ENCODE measurements at regions of chr11 and their contacts with region 1.

Region 1: GRCh38 chr11:128482512-128483191 is 104.7 kb downstream of the ETS1 start:
- DNase-seq: peak in 6 of 14 experiments; percentile 51 to 87 (median 70)
- ATAC-seq: peak; percentile 58
- H3K4me3 ChIP-seq: peak overlapping the region; percentile 46
- H3K4me3 Mint-ChIP-seq: peak overlapping the region; percentile 76
- H3K27ac ChIP-seq: peak overlapping the region; percentile 92 to 94
- H3K27ac Mint-ChIP-seq: peak overlapping the region; percentile 99
- H3K4me1 ChIP-seq: peaks cover 95% of the 10 kb centered on the region
- H3K4me1 Mint-ChIP-seq: peaks cover 99% of the 10 kb centered on the region
- H3K27me3 ChIP-seq: no peaks in the 10 kb centered on the region
- H3K27me3 Mint-ChIP-seq: no peaks in the 10 kb centered on the region
- CTCF ChIP-seq: no peak

Region 2: DNA sequence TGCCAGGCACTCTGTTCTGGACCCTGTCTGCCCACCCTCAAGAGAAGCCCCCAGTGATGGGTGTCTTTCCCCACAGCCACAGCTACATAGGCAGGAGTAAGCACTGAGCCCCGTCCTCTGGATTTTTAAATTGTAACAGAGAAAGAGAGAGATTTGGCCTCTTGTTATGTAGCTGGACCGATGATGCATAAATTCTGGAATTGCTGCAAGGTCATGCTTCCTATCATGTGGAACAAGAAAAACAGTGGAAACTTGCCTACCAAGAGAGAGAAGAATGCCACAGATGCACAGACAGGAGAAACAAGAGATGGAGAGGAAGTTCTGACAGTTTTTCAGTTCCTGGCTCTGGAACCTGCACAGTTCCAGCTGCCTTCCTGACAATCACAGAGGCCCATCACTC is 45.5 kb before region 1 on chr11:
- CTCF ChIA-PET with region 1: no interaction called
- POLR2A ChIA-PET with region 1: no interaction called
- intact Hi-C with region 1: no loop called
- DNase-seq: no peak
- ATAC-seq: no peak
- H3K4me3 ChIP-seq: no peak overlapping the region
- H3K4me3 Mint-ChIP-seq: no peak overlapping the region
- H3K27ac ChIP-seq: no peak overlapping the region
- H3K27ac Mint-ChIP-seq: no peak overlapping the region
- H3K4me1 ChIP-seq: no peaks in the 10 kb centered on the region
- H3K4me1 Mint-ChIP-seq: peaks cover 31% of the 10 kb centered on the region
- H3K27me3 ChIP-seq: no peaks in the 10 kb centered on the region
- H3K27me3 Mint-ChIP-seq: no peaks in the 10 kb centered on the region
- CTCF ChIP-seq: no peak

Region 3: DNA sequence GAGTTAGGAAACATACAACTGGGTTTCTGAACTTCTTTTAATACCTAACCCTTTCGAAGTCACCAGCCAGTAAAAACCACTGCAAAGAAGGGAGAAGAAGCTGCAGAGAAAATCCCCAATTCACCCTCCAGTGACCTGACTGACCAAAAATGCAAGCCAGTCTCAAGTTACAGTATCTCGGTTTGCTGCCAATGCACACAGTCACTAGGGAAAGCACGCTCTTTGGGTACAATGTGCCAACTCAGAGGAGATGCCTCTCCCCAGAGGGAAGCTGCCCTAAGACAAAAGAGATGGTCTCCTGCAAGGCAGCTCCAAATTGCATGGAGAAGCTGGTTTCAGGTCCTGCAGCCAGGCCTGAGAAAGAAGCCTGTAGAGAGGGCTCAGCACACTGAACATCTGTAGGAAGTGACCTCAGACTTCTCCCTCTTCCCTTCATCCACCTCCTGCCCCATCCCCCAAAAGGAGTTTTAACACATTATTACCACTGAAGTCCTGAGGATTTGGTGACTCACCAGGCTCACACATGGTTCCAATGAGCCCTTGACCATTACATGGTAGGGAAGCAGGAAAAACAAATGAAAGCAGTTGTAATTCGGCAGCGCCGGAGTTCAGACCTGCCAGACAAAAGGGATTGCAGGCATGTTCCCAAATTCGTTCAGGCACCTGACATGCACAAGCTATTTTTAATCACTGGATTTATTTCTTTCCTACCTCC is 14.6 kb after region 1 on chr11:
- CTCF ChIA-PET with region 1: interaction called, 4 read pairs
- POLR2A ChIA-PET with region 1: interaction called, 611 read pairs
- intact Hi-C with region 1: loop called (anchors 1 to 2 kb)
- DNase-seq: peak in 3 of 14 experiments; percentile 16 to 65 (median 59)
- ATAC-seq: no peak
- H3K4me3 ChIP-seq: peak overlapping the region; percentile 39
- H3K4me3 Mint-ChIP-seq: peak overlapping the region; percentile 65
- H3K27ac ChIP-seq: peak overlapping the region; percentile 39 to 93
- H3K27ac Mint-ChIP-seq: peak overlapping the region; percentile 99
- H3K4me1 ChIP-seq: peaks cover 75% of the 10 kb centered on the region
- H3K4me1 Mint-ChIP-seq: peaks cover 100% of the 10 kb centered on the region
- H3K27me3 ChIP-seq: no peaks in the 10 kb centered on the region
- H3K27me3 Mint-ChIP-seq: no peaks in the 10 kb centered on the region
- CTCF ChIP-seq: no peak

Region 4: GRCh38 chr11:128802358-128802981 is 319.8 kb after region 1 on chr11:
- CTCF ChIA-PET with region 1: no interaction called
- POLR2A ChIA-PET with region 1: no interaction called
- intact Hi-C with region 1: no loop called
- DNase-seq: no peak
- ATAC-seq: no peak
- H3K4me3 ChIP-seq: no peak overlapping the region
- H3K4me3 Mint-ChIP-seq: no peak overlapping the region
- H3K27ac ChIP-seq: no peak overlapping the region
- H3K27ac Mint-ChIP-seq: peak overlapping the region; percentile 57
- H3K4me1 ChIP-seq: peaks cover 8% of the 10 kb centered on the region
- H3K4me1 Mint-ChIP-seq: peaks cover 24% of the 10 kb centered on the region
- H3K27me3 ChIP-seq: no peaks in the 10 kb centered on the region
- H3K27me3 Mint-ChIP-seq: no peaks in the 10 kb centered on the region
- CTCF ChIP-seq: no peak